Astrocyte of the cerebellum (primary cell): ENCODE measurements at regions of chr3 and their contacts with region 1.

Region 1: GRCh38 chr3:162437480-162437879 is 940.9 kb downstream of the OTOL1 start:
- DNase-seq: no peak
- H3K4me3 ChIP-seq: no peak overlapping the region
- CTCF ChIP-seq: no peak

Region 2: DNA sequence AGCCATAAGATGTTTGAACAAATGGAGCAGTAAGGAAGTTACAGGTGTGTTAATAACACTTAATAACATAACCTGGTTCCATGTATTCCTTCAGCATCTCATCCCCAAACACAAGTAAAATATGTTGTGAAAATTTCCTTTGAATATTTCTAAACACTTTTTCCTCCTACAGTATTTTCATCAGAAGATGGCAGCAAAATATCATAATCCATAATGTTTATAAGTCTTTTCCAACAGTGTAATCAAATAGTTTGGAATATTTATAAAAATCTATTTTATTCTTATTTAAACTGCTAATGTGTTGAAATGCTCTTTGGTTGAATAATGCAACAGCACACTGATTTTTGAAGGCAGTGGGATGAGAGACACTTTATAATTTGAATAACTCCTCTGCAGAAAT is 79.6 kb after region 1 on chr3:
- in situ Hi-C with region 1: loop called (anchors 5 kb)
- DNase-seq: no peak
- H3K4me3 ChIP-seq: no peak overlapping the region
- CTCF ChIP-seq: no peak